Natural killer cell (primary cell): ENCODE measurements at regions of chr2 and their contacts with region 1.

Region 1: DNA sequence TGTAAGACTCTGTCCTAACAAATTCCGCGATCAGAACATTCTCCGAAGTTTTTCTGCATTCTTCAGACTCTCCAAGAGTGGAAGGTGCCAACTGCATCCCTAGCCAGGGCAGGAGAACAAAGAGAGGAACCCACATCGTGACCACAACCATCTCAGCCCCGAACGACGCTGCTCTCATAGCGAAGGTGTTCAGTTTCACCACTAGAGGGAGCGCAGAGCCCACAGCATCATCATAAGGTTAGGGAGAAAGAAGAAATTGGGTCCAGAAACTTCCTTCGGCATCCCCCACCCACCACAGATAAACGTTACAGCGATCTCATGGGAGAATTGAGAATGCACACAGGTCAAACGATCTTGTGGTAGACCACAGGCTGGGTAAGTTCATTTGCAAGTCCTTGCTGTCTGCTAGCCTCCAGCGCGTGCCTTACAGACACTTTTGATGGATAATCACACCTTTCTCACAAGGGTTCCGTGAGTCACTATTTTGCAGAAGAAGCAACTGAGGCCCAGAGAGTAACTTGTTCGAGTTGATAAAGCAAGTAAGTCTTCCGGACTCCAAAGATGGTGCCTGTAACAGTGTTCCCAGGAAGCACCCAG is 53.7 kb upstream of the ARL4C start:
- DNase-seq: peak; percentile 39 to 80
- ATAC-seq: peak; percentile 68 to 93 (median 81)
- H3K4me3 ChIP-seq: no peak overlapping the region
- H3K4me3 Mint-ChIP-seq: no peak overlapping the region
- H3K27ac ChIP-seq: no peak overlapping the region
- H3K27ac Mint-ChIP-seq: no peak overlapping the region
- H3K4me1 ChIP-seq: peaks cover 10% of the 10 kb centered on the region
- H3K4me1 Mint-ChIP-seq: peaks cover 17% of the 10 kb centered on the region in 2 donors
- H3K27me3 ChIP-seq: no peaks in the 10 kb centered on the region
- H3K27me3 Mint-ChIP-seq: peaks cover 27 to 46% of the 10 kb centered on the region in 2 donors
- CTCF ChIP-seq: peak; percentile 91

Region 2: GRCh38 chr2:234512884-234513669 is 37.5 kb before region 1 on chr2:
- intact Hi-C with region 1: no loop called
- DNase-seq: no peak
- ATAC-seq: no peak
- H3K4me3 ChIP-seq: no peak overlapping the region
- H3K4me3 Mint-ChIP-seq: no peak overlapping the region
- H3K27ac ChIP-seq: no peak overlapping the region
- H3K27ac Mint-ChIP-seq: no peak overlapping the region
- H3K4me1 ChIP-seq: no peaks in the 10 kb centered on the region
- H3K4me1 Mint-ChIP-seq: no peaks in the 10 kb centered on the region
- H3K27me3 ChIP-seq: no peaks in the 10 kb centered on the region
- H3K27me3 Mint-ChIP-seq: peaks cover 6 to 18% of the 10 kb centered on the region in 2 donors
- CTCF ChIP-seq: no peak

Region 3: GRCh38 chr2:235116885-235117492 is 566.4 kb after region 1 on chr2:
- intact Hi-C with region 1: loop called (anchors 2 kb)
- DNase-seq: peak in 1 of 2 donors; percentile 46
- ATAC-seq: no peak
- H3K4me3 ChIP-seq: no peak overlapping the region
- H3K4me3 Mint-ChIP-seq: no peak overlapping the region
- H3K27ac ChIP-seq: no peak overlapping the region
- H3K27ac Mint-ChIP-seq: no peak overlapping the region
- H3K4me1 ChIP-seq: no peaks in the 10 kb centered on the region
- H3K4me1 Mint-ChIP-seq: no peaks in the 10 kb centered on the region
- H3K27me3 ChIP-seq: peaks cover 7% of the 10 kb centered on the region
- H3K27me3 Mint-ChIP-seq: peaks cover 13 to 47% of the 10 kb centered on the region in 2 donors
- CTCF ChIP-seq: peak; percentile 71

Region 4: DNA sequence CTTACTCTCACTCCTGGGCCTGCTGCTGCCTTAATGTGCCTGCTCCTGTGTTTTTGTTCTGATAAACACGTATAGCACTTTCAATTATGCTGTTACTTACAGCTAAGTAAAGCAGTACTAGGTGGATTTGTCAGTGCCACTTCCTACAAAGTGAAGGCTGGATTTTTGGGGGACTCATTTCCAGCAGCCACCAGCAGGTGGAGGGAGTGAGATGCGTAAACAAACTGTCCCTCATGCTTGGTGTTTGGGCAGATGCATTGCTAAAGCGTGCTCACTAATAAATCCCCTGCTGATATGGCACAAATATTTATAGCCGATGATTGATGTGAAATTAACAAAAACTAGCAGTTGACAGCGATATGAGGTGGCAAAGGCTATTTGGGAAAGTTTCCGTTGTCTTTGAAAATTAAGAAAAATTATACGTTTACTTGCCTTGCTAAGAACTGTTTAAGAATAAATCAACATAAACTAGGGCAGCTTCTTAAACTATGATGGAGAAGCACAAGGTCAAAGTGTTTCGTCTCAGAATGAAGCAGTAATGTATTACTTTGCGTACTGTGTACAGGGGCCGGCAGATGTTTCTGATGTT is 1044.9 kb after region 1 on chr2:
- intact Hi-C with region 1: loop called (anchors 2 kb)
- DNase-seq: peak; percentile 42 to 62
- ATAC-seq: peak in 2 of 3 donors; percentile 40 to 71
- H3K4me3 ChIP-seq: no peak overlapping the region
- H3K4me3 Mint-ChIP-seq: no peak overlapping the region
- H3K27ac ChIP-seq: no peak overlapping the region
- H3K27ac Mint-ChIP-seq: no peak overlapping the region
- H3K4me1 ChIP-seq: no peaks in the 10 kb centered on the region
- H3K4me1 Mint-ChIP-seq: no peaks in the 10 kb centered on the region
- H3K27me3 ChIP-seq: no peaks in the 10 kb centered on the region
- H3K27me3 Mint-ChIP-seq: peaks cover 4 to 6% of the 10 kb centered on the region in 2 donors
- CTCF ChIP-seq: peak; percentile 62